GM10248 (cell line): ENCODE measurements at regions of chr4 and their contacts with region 1.

Region 1: GRCh38 chr4:164937576-164938270 is 39.7 kb downstream of the TRIM61 start:
- DNase-seq: peak; percentile 32
- CTCF ChIP-seq: peak; percentile 48

Region 2: GRCh38 chr4:164779811-164780216 is 157.9 kb before region 1 on chr4:
- CTCF ChIA-PET with region 1: interaction called, 17 read pairs
- POLR2A ChIA-PET with region 1: no interaction called
- DNase-seq: peak; percentile 51
- CTCF ChIP-seq: peak; percentile 95

Region 3: DNA sequence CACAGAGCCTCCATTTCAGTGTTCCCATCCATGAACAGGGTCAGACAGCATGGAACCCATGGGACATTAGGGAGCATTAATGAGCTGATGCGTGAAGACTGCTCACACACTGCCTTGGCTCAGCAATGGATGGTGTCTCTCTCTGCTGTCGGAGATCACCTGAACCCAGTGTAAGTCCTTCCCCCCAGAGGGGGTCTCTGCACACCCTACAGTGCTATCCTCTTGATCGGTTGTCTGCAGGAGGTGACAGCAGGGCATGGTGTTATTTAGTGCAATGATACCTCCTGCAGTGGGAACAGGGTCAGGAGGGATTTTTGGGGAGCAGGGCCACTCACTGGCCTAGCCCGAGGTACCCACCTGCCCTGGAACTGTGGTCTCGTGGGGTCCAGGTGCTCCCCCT is 35.1 kb before region 1 on chr4:
- CTCF ChIA-PET with region 1: interaction called, 11 read pairs
- POLR2A ChIA-PET with region 1: no interaction called
- DNase-seq: no peak
- CTCF ChIP-seq: no peak

Region 4: GRCh38 chr4:164926301-164926700 is 11.4 kb before region 1 on chr4:
- CTCF ChIA-PET with region 1: interaction called, 11 read pairs
- POLR2A ChIA-PET with region 1: no interaction called
- DNase-seq: no peak
- CTCF ChIP-seq: no peak

Region 5: GRCh38 chr4:164949448-164950143 is 11.9 kb after region 1 on chr4:
- CTCF ChIA-PET with region 1: interaction called, 98 read pairs
- POLR2A ChIA-PET with region 1: no interaction called
- DNase-seq: no peak
- CTCF ChIP-seq: peak; percentile 19

Region 6: DNA sequence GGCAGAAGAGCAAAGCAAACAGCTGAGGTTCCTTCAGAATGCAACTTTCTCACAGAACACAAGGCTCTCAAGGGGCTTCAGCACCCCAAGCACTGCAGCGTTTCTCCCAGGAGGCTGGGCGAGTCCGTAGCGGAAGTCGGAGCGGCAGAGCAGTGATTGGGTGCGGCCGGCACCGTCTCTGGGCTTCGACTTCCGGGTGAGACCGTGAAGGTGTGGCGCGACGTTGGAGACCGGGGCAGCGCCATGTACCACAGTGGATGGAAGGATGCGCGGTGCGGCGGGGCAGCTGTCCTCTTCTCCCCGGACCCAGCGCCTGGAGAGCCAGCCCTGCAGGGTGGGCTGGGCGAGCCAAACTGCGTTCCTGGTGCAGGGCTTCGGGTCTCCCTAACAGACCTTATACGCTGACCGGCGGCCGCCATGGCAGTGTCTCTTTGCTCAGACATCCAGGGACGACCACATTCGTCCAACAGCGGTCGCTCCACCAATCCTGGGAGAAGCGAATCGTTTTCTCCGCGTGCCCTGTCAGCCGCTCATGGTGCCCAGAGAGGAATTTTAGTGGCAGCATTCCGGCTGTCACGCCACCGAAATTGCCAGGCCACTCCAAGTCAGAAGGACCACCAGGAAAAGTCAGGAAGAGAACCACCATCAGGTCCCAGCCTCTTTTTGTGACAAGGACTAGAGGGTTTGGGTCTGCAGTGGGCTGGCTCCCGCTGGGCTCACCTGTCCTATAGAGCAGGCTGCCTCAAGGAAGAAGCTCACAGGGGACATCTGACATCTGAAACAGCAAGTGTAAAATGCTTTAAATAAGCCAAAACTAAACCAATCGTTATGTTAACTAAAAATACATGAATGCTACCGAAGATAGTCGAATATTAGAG is 19.3 kb after region 1 on chr4:
- CTCF ChIA-PET with region 1: interaction called, 98 read pairs
- POLR2A ChIA-PET with region 1: no interaction called
- DNase-seq: peak; percentile 93
- CTCF ChIP-seq: no peak